ENCODE measurements at regions of chr18 and their contacts with region 1.

Region 1: DNA sequence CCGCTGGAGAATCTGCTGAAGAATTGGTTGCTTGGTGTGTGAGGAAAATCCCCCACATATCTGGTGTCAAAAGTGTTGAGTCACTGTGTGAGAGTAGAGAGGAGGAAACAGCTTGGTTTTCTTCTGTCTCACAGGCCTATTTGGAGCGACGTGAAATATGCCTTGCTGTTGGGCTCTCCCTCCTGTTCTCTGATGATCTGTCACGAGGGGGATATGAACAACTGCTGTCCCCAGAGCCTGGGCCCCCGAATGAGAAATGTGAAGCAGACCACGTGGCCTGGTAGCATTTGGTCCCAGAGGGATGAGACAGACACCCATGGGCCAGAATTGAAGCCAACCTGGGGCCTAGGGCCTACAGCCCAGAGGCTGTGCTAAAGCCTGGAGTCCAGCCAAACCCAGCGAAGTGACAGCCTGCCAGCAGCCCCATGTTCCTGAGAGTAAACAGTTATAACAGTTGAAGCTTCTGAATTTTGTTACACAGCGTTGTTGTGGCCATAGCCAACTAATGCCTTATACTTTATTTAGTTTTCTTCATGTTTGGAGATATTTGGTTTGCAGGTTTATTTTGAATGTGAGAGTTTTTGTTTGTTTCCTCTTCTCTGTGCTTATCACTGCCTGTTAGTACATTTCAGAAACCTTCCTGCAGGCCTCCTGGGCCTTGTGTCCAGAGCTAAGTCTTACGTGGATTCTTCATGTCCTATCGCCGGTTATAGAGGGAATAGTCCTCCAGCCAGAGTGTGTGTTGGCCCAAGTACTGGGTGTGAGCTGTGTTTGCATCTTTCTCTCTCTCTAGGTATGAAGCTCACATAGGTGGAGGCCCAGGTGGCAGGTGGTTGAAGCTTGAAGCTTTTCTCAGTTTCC is 18.7 kb upstream of the COLEC12 start:
- DNase-seq: peak; percentile 54 to 76 (median 62)
- ATAC-seq: peak; percentile 79 to 85 (median 82)
- H3K4me3 ChIP-seq: no peak overlapping the region
- H3K27ac ChIP-seq: peak overlapping the region in 7 of 12 donors; percentile 11 to 81 (median 56)
- H3K4me1 ChIP-seq: peaks cover 0 to 20% (median 5%) of the 10 kb centered on the region in 12 donors
- H3K27me3 ChIP-seq: no peaks in the 10 kb centered on the region
- CTCF ChIP-seq: no peak
- POLR2A ChIP-seq: no peak

Region 2: DNA sequence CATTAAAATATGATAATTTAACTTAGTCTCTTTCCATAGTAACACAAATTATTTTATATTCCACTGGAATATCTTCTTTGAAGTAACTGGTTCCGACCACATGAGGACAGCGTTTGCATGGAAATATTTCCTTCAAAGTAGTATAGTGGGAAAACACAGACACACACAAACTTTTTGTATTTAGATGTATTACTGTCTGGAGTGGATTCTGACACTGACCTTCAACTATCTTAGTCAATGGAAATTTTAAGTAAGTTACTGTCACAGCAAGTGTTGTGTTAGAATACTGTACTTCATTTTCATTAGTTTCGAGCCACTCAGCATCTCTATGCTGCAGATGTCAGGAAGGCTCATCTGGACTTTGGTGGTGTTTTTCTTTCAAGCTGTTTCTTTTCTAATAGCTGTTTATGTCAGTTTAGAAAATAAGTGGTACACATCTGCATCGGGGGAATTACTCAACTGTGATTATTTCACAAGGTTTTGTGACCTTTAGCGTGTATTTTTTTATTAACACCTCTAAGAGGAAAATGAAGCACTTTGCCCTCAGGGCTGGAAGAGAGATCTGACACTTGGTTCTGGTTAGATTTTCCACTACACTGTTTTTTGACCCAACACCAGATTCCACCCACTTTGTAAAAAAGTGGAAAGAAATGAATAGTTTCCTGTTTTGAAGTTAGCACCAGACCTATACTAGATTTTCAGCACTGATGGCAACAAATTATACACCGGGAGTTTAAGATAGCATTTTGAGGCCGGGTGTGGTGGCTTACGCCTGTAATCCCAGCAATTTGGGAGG is 232.5 kb before region 1 on chr18:
- intact Hi-C with region 1: no loop called
- DNase-seq: no peak
- ATAC-seq: peak in 2 of 4 donors; percentile 52 to 57
- H3K4me3 ChIP-seq: no peak overlapping the region
- H3K27ac ChIP-seq: no peak overlapping the region
- H3K4me1 ChIP-seq: peaks cover 0 to 10% (median 0%) of the 10 kb centered on the region in 12 donors
- H3K27me3 ChIP-seq: no peaks in the 10 kb centered on the region
- CTCF ChIP-seq: peak; percentile 23 to 66 (median 57)
- POLR2A ChIP-seq: no peak

Region 3: DNA sequence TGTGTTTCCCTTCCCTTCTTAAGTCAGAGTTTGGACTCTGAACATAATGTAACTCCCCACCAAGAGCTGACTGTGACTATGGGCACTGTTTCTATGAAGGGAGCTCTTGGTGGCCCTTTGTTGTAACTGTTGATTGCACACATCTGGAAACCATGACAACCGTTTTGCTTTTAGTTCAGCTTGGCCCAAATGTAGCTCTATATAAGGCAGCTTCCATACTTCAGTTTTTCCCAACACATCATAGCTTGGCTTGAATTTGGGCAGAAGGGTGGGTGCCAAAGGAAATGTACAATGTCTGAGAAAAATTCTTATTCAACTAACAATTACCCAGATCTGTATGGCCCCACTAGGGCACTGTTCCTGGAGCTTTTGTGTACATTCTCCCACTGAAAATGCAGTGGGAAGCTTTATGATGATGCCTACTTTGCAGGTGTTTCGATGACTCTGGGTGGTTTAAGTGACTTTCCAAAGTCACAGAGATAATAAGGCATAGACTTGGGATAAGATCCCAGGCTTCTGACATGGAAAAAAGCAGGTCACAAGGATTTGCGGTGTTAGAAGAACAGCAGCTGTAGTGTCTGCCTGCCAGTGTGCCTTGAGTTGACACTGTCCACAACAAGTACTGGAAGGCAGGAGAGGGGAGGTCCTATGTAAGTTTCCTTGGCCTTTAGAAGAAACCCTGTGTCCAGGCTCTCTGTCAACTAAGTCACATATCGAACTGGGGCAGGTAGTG is 58.6 kb after region 1 on chr18:
- intact Hi-C with region 1: no loop called
- DNase-seq: no peak
- ATAC-seq: no peak
- H3K4me3 ChIP-seq: no peak overlapping the region
- H3K27ac ChIP-seq: no peak overlapping the region
- H3K4me1 ChIP-seq: peaks cover 0 to 25% (median 0%) of the 10 kb centered on the region in 12 donors
- H3K27me3 ChIP-seq: no peaks in the 10 kb centered on the region
- CTCF ChIP-seq: no peak
- POLR2A ChIP-seq: no peak

Region 4: GRCh38 chr18:607930-608329 is 88.7 kb after region 1 on chr18:
- intact Hi-C with region 1: loop called in 1 of 10 experiments (anchors 10 kb)
- DNase-seq: no peak
- ATAC-seq: peak in 1 of 4 donors; percentile 41
- H3K4me3 ChIP-seq: no peak overlapping the region
- H3K27ac ChIP-seq: no peak overlapping the region
- H3K4me1 ChIP-seq: no peaks in the 10 kb centered on the region
- H3K27me3 ChIP-seq: no peaks in the 10 kb centered on the region
- CTCF ChIP-seq: no peak
- POLR2A ChIP-seq: no peak

Measured in heart left ventricle (tissue), 16 donors.